HEK293T (cell line): ENCODE measurements at regions of chr1 and their contacts with region 1.

Region 1: DNA sequence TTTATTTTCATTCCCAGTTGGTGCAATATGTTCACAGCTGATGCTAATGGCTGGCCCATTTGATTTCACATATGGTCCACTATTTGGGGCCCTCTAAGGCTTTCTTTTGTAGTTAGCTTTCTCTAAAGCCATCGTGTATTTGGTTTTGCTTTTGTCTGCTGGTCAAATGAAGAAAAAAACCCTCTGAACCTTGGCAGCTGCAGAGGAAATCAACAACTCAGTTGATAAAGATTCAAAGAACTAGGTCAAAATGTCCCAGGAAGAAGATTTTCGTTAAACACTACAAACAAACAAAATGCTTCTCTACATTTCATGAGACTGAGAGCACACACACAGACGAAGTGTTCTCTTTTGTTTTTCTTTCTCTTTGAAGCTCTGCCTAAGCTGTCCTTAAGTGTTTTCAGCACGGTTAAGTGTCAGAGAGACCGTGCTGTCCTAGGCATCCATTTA is 655.0 kb downstream of the RWDD3 start:
- DNase-seq: no peak

Region 2: GRCh38 chr1:95679262-95679661 is 209.7 kb before region 1 on chr1:
- CTCF ChIA-PET with region 1: interaction called, 10 read pairs
- POLR2A ChIA-PET with region 1: no interaction called
- DNase-seq: no peak

Region 3: DNA sequence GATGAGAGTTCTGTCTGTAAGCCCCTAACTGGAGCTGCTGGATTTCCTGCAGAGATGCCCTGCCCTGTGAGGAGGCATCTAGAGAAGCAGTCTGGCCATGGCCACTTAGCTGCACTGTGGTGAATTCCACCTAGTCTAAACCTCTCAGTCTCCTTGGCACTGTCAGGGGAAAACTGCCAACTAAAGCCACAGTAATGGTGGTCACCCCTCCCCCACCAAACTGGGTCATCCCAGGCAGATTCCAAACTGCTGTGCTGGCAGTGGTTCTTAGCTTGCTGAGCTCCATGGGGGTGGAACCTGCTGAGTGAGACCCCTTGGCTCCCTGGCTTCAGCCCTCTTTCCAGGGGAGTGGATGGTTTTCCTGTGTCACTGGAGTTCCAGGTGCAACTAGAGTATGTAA is 85.6 kb after region 1 on chr1:
- CTCF ChIA-PET with region 1: no interaction called
- POLR2A ChIA-PET with region 1: no interaction called
- DNase-seq: no peak

Region 4: DNA sequence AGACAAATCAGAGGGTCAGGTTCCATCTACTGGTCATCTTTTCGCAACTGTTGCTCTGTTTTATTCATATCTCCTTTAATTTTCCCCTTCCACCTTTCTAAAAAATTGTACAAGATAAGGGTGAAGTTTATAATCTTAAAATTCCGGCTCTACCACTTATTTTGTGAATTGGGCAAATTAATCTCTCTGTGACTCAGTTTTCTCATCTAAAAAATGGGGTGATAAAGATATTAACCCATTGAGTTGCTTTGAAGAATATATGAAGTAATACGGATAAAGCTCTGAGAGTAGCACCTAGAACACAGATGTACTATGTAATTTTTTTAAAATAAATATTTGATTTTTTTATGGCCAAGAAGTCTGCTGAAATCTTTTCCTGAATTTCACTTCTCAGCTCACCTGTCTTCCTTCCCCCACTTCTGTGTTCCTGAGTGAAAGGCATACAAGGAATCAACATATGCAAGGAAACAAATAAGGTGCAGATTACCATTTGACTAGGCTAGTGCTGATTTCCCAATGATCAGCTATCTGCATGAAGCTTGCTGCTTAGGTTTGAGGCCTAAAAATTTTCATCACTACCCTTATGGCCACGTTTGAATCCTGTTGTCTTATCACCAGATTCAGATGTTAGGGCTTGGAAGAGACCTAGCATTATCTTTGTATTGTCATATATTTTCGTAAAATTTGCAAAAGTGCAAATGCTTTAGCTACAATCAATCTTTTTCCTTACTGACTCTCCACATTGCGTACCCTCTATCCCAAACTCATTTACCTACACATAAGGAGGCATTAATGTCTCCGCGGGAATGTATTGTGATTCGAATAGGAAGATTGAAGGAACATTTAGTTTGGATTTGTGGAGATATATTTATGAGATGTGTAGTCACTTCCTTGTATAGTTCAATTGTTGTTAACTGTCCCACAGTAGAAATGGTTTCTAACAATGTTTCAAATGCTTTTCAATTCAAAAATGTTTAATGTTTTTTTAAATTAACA is 114.3 kb after region 1 on chr1:
- CTCF ChIA-PET with region 1: no interaction called
- POLR2A ChIA-PET with region 1: no interaction called
- DNase-seq: no peak